ENCODE measurements at regions of chr16 and their contacts with region 1.

Region 1: GRCh38 chr16:4624827-4625559 is 367 bp downstream of the MGRN1 start:
- DNase-seq: peak; percentile 70 to 80
- ATAC-seq: peak; percentile 30 to 49 (median 38)
- H3K4me3 ChIP-seq: peak overlapping the region; percentile 94
- H3K27ac ChIP-seq: peak overlapping the region; percentile 96
- H3K4me1 ChIP-seq: peaks cover 18% of the 10 kb centered on the region
- H3K27me3 ChIP-seq: no peaks in the 10 kb centered on the region
- CTCF ChIP-seq: no peak

Region 2: DNA sequence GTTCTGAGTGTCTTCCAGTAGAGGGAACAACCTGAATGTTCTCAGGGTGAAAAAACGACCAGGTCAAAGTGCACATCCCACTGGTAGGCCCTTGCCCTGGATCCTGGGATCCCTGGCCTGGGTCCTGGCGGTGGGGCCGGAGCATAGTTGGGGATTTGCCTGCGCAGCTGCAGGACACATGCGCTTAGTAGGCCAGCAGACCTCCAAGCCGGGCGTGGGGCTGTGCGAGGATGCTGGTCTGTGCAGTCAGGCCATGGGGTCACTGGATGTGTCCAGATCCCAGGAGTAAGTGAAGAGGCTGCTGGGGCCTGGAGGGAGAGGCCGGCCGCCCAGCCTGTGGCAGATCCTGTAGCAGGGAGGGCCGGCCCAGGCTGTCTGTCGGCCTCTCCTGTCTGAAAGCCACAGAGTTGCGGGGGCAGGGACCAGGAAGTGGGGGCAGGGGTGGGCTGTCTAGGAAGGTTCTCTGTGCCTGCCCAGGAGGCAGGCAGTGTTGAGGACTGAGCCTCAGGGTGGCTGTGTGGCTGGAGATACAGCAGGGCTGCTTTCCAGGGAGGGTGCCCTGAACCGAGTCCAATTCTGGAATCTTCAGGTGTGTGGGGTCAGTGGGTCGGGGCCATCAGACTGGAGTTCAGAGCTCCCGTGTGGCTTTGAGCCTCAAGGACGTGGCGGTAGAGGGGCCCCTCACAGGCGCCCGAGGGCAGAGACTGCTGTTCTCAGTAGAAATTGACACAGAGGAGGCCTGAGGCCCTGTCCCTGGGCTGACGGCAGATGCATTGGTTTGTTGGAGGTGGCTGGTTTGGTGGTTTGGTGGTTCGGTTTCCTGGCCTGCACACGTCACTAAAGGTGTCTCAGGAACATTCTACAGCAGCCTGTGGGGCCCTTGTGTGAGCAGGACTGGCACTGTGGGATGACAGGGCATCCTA is 51.1 kb after region 1 on chr16:
- intact Hi-C with region 1: loop called in 1 of 2 experiments (anchors 1 kb)
- DNase-seq: no peak
- ATAC-seq: no peak
- H3K4me3 ChIP-seq: no peak overlapping the region
- H3K27ac ChIP-seq: peak overlapping the region; percentile 48
- H3K4me1 ChIP-seq: peaks cover 18% of the 10 kb centered on the region
- H3K27me3 ChIP-seq: no peaks in the 10 kb centered on the region
- CTCF ChIP-seq: no peak

Region 3: GRCh38 chr16:4766874-4767628 is 142.1 kb after region 1 on chr16 and contains the start of gene ZNF500:
- intact Hi-C with region 1: no loop called
- DNase-seq: peak; percentile 99
- ATAC-seq: peak; percentile 92 to 97 (median 94)
- H3K4me3 ChIP-seq: peak within 1 kb of the TSS; percentile 77
- H3K27ac ChIP-seq: peak within 1 kb of the TSS; percentile 78
- H3K4me1 ChIP-seq: peaks cover 19% of the 10 kb centered on the region
- H3K27me3 ChIP-seq: no peaks in the 10 kb centered on the region
- CTCF ChIP-seq: no peak
- total RNA-seq, gene ZNF500: 4.8 to 8.9 (median 7.9) TPM

Region 4: DNA sequence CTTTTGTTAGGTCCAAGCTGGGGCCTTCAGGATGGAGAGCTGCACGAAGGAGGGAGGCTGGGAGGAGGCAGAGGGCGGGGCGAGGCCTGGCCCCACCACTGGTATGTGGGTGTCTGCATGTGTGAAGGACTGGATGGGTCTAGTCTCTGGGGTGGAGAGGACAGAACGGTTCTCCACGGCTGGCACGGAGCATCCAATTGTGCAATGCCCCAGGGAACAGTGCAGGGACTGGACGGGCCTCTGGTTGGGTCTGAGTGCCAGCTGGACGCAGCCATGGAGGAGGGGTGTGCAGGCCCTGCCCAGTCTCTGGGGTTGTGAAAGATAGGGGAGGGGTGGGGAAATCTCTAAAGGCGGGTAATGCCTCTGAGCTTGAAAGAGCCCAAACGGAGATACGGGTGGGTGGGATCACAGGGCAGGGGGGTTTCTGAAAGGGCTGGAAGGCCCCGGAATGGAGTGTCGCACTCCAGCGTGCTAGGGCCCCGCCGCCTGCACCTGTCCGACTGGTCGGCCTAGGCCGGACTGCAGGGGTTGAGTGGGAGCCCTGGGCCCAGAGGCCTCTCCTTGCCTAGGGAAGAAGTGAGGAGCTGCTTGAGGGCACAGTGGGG is 310.4 kb after region 1 on chr16:
- intact Hi-C with region 1: no loop called
- DNase-seq: peak; percentile 97 to 98
- ATAC-seq: peak; percentile 94 to 96 (median 95)
- H3K4me3 ChIP-seq: peak overlapping the region; percentile 66
- H3K27ac ChIP-seq: no peak overlapping the region
- H3K4me1 ChIP-seq: peaks cover 15% of the 10 kb centered on the region
- H3K27me3 ChIP-seq: peaks cover 0 to 43% (median 5%) of the 10 kb centered on the region in 3 donors
- CTCF ChIP-seq: no peak